PC-9 (cell line): ENCODE measurements at regions of chr6 and their contacts with region 1.

Region 1: DNA sequence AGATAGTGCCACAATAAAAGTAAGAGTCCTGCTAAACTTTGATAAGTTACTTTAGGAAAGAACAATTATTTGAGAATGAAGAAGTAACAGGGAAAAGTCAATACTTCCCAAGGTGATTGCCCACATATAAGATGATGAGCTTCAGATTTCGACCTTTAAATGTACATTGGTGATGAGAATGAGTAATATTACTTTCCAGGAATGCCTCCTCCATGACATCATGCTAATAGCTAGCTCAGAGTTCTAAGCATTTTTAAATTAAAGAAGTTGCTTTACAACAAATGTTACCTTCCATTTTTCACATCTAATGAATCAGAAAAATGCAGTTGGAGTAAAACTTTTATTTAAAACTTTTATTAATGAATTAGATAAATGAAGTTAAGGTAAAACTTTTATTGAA is 22.5 kb upstream of the OPN5 start:
- DNase-seq: no peak
- H3K4me3 ChIP-seq: no peak overlapping the region
- H3K27ac ChIP-seq: no peak overlapping the region
- H3K4me1 ChIP-seq: no peaks in the 10 kb centered on the region
- H3K27me3 ChIP-seq: no peaks in the 10 kb centered on the region
- CTCF ChIP-seq: no peak

Region 2: GRCh38 chr6:46972531-46972930 is 786.8 kb before region 1 on chr6:
- CTCF ChIA-PET with region 1: no interaction called
- POLR2A ChIA-PET with region 1: no interaction called
- intact Hi-C with region 1: no loop called
- DNase-seq: no peak
- H3K4me3 ChIP-seq: no peak overlapping the region
- H3K27ac ChIP-seq: 0 out of 2 replicates have a peak overlapping the region, but pooled peaks have one; percentile 7
- H3K4me1 ChIP-seq: peaks cover 19% of the 10 kb centered on the region
- H3K27me3 ChIP-seq: no peaks in the 10 kb centered on the region
- CTCF ChIP-seq: no peak

Region 3: GRCh38 chr6:47477497-47478232 is 281.7 kb before region 1 on chr6 and contains the start of gene CD2AP:
- CTCF ChIA-PET with region 1: no interaction called
- POLR2A ChIA-PET with region 1: interaction called, 10 read pairs
- intact Hi-C with region 1: no loop called
- DNase-seq: peak; percentile 80 to 85
- H3K4me3 ChIP-seq: peak within 1 kb of the TSS; percentile 95
- H3K27ac ChIP-seq: peak within 1 kb of the TSS; percentile 97
- H3K4me1 ChIP-seq: peaks cover 38% of the 10 kb centered on the region
- H3K27me3 ChIP-seq: no peaks in the 10 kb centered on the region
- CTCF ChIP-seq: no peak; the same call in 1 of the 2 replicates
- total RNA-seq, gene CD2AP: 48.8 and 55.5 TPM in 2 replicates

Region 4: GRCh38 chr6:48016020-48016755 is 256.8 kb after region 1 on chr6:
- CTCF ChIA-PET with region 1: no interaction called
- POLR2A ChIA-PET with region 1: interaction called, 10 read pairs
- intact Hi-C with region 1: no loop called
- DNase-seq: no peak
- H3K4me3 ChIP-seq: no peak overlapping the region
- H3K27ac ChIP-seq: no peak overlapping the region
- H3K4me1 ChIP-seq: no peaks in the 10 kb centered on the region
- H3K27me3 ChIP-seq: no peaks in the 10 kb centered on the region
- CTCF ChIP-seq: no peak